ENCODE measurements at regions of chr1 and their contacts with region 1.

Region 1: DNA sequence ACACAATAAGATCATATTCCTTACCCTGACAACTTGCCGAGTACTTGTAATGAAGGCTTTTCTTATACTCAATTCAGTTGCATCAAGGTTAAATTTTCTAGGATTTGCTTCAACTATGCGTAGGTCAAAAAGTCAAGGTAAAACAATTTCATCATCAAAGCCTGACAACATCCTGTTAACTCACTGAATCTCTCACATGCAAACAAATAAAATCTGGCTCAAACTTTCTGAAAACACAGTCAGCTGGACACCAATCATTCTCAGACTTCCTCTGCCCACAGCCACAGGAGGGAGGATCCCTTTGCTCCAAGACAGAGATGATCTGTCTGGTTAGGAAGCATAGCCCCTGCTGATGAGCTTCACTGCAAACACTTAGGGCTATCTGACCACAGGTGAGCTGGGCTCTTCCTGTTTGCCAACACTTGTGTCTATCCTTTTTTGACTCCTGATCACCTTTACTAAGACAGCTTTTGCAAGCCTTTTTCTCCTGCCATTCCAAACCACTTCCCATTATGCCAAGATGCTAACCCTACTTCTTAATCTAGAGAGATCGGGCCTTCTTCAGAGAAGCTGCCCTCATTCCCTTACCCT is 20.0 kb downstream of the STX6 start:
- DNase-seq: no peak
- CTCF ChIP-seq: no peak

Region 2: GRCh38 chr1:180988253-180988752 is 14.4 kb before region 1 on chr1:
- CTCF ChIA-PET with region 1: interaction called, 34 read pairs
- POLR2A ChIA-PET with region 1: no interaction called
- DNase-seq: no peak
- CTCF ChIP-seq: no peak